CD4-positive, alpha-beta memory T cell (primary cell): ENCODE measurements at regions of chr1 and their contacts with region 1.

Region 1: GRCh38 chr1:85240174-85240601 is 19.3 kb downstream of the C1orf52 start:
- DNase-seq: peak in 3 of 5 donors; percentile 11 to 17 (median 12)
- H3K4me3 ChIP-seq: no peak overlapping the region
- H3K4me3 Mint-ChIP-seq: peak overlapping the region in 1 of 8 donors; percentile 9
- H3K27ac ChIP-seq: no peak overlapping the region
- H3K27ac Mint-ChIP-seq: peak overlapping the region in 3 of 7 donors; percentile 37 to 78 (median 50)
- H3K4me1 ChIP-seq: peaks cover 8% of the 10 kb centered on the region
- H3K4me1 Mint-ChIP-seq: peaks cover 6 to 12% (median 10%) of the 10 kb centered on the region in 4 donors
- H3K27me3 ChIP-seq: no peaks in the 10 kb centered on the region
- H3K27me3 Mint-ChIP-seq: peaks cover 2 to 4% of the 10 kb centered on the region in 2 donors

Region 2: GRCh38 chr1:85109475-85109874 is 130.7 kb before region 1 on chr1:
- CTCF ChIA-PET with region 1: interaction called, 17 read pairs
- POLR2A ChIA-PET with region 1: no interaction called
- intact Hi-C with region 1: loop called (anchors 1 kb)
- DNase-seq: peak in 4 of 5 donors; percentile 33 to 44 (median 41)
- H3K4me3 ChIP-seq: no peak overlapping the region
- H3K4me3 Mint-ChIP-seq: no peak overlapping the region
- H3K27ac ChIP-seq: no peak overlapping the region
- H3K27ac Mint-ChIP-seq: peak overlapping the region in 1 of 7 donors; percentile 59
- H3K4me1 ChIP-seq: no peaks in the 10 kb centered on the region
- H3K4me1 Mint-ChIP-seq: no peaks in the 10 kb centered on the region
- H3K27me3 ChIP-seq: no peaks in the 10 kb centered on the region
- H3K27me3 Mint-ChIP-seq: peaks cover 0 to 2% of the 10 kb centered on the region in 2 donors